Sigmoid colon (tissue), 7 donors: ENCODE measurements at regions of chr2 and their contacts with region 1.

Region 1: DNA sequence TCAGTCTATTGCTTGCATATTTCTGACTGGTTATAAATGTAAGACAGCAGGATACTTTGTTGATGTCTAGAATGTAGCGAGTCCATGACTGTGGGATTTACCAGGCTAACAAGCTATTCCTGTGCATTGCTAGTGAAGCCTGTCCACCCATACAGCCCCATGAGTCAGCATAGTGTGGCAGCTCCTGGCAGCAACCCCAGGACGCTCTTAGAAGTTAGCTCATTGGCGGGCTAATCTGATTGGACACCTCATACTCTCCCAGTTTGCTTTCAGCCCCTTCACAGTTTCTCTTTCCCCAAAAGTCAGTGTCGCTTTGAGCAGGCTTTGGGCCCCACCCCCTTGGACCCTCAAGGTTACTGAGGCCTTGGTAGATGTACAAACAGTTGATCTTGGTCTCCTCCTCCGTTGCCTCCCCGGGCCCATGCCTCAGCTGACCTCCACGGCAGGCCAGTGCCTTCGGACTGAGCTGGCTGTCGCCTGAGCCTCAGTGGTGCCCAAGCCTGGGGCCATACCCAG is 48.0 kb downstream of the COA5 start:
- DNase-seq: peak; percentile 83
- H3K4me3 ChIP-seq: no peak overlapping the region
- H3K27ac ChIP-seq: peak overlapping the region; percentile 74 to 84 (median 79)
- H3K4me1 ChIP-seq: peaks cover 0 to 46% (median 43%) of the 10 kb centered on the region in 4 donors
- H3K27me3 ChIP-seq: no peaks in the 10 kb centered on the region
- CTCF ChIP-seq: no peak
- EP300 ChIP-seq: no peak
- POLR2A ChIP-seq: no peak

Region 2: GRCh38 chr2:98518090-98518489 is 42.2 kb before region 1 on chr2:
- intact Hi-C with region 1: loop called (anchors 5 kb)
- DNase-seq: peak; percentile 68
- H3K4me3 ChIP-seq: no peak overlapping the region
- H3K27ac ChIP-seq: peak overlapping the region in 1 of 4 donors; percentile 64
- H3K4me1 ChIP-seq: peaks cover 0 to 58% (median 38%) of the 10 kb centered on the region in 4 donors
- H3K27me3 ChIP-seq: no peaks in the 10 kb centered on the region
- CTCF ChIP-seq: peak; percentile 22 to 40 (median 29)
- EP300 ChIP-seq: no peak
- POLR2A ChIP-seq: no peak

Region 3: DNA sequence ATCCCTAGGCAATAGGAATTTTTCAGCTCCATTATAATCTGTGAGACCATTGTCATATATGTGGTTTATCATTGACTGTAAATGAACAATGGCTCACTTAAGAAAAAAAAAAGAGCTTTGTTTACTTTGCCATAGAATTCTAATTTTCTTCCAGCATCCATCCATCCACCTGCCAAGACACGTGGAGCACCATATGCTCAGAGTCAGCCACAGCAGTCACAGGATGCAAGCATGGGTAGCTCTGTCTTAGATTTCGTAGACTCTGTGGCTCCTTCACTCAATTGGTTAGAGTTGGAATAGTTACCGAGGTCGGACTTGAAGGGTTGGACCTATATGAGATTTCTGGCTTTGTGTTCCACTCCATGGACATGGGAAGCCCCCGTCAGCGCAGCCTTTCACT is 27.6 kb before region 1 on chr2:
- intact Hi-C with region 1: no loop called
- DNase-seq: no peak
- H3K4me3 ChIP-seq: no peak overlapping the region
- H3K27ac ChIP-seq: no peak overlapping the region
- H3K4me1 ChIP-seq: no peaks in the 10 kb centered on the region
- H3K27me3 ChIP-seq: no peaks in the 10 kb centered on the region
- CTCF ChIP-seq: no peak
- EP300 ChIP-seq: no peak
- POLR2A ChIP-seq: no peak